ENCODE measurements at regions of chr2 and their contacts with region 1.

Region 1: DNA sequence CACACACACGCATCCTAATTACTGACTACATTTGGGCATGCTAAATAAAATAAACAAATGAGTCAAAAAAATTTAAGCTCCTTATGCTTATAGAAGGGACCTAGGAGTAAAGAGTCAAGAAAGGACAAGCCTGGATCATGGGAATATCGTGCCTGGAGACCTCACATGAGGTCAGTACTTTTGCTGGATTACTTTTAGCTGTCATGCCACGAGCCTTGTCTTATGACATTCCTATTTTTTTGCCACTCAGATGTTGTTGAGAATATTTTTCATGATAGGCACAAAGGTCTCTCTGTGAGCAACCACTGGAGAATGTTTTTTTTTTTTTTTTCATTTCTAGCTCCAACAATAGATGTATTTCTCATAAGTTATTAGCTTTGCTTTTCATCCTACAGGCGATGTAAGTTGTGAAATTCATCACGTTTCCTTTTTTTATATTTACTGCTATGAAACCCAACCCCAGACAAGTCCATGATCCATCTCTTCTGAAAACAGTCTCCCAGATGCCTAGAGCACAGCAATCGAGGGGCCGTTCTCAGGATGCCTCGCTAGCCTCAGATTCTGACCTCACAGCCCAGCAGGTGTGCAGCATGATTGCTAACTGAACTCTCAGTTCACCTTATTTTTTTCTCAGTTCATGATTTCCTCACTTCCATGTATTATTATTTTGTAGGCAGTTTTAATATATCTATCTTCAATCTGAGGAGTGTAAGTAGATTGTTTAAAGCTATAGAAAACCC is 464.5 kb downstream of the IRS1 start:
- DNase-seq: peak in 1 of 2 experiments; percentile 29
- H3K4me3 ChIP-seq: no peak overlapping the region
- H3K27ac ChIP-seq: no peak overlapping the region
- H3K4me1 ChIP-seq: peaks cover 16% of the 10 kb centered on the region
- H3K27me3 ChIP-seq: no peaks in the 10 kb centered on the region
- CTCF ChIP-seq: no peak

Region 2: DNA sequence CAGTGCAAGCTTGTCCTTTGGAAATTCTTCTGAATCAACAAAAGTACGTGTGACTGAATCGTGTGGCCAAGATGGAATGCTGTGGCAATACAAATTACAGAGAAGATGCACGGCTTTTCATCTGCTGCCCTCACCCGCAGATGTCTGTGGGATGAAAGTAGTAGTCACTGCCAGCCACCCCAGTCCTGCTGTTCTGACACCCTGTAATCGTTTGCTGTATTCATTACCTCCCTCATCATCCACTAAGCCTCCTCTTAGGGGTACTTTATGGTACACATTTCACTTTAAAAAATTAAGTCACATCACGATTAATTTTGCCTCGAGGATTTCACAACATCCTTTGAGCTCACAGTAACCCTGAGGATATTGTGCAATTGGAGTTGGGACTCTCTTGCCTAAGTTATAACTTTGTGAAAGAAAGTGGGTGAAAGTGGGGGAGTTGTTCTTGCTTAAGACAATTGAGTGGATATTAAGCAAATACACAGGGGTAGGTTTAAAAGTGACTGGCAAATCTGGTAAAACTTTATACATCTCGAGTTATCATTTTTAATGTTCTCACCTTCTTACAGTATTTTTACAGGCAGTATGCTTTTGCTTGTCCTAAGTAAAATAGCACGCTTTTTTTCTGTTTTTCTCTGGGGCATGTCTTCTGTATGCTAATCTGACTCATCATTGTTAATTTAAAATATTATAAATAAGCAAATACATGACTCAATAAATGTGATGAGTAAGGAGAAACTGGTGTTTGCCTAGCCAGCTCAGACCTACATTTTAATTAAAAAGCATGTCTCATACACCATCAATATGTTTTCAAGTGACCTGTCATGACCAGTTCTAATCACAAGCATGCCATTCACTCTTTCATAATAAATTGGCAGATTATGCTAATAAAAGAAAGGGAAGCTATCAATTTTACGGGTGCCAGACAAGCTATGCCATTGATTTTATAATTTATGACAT is 216.4 kb before region 1 on chr2:
- CTCF ChIA-PET with region 1: no interaction called
- POLR2A ChIA-PET with region 1: no interaction called
- intact Hi-C with region 1: loop called (anchors 5 kb)
- DNase-seq: peak; percentile 33 to 92
- H3K4me3 ChIP-seq: peak overlapping the region; percentile 27; the same call in 1 of the 2 replicates
- H3K27ac ChIP-seq: peak overlapping the region; percentile 93
- H3K4me1 ChIP-seq: peaks cover 64% of the 10 kb centered on the region
- H3K27me3 ChIP-seq: no peaks in the 10 kb centered on the region
- CTCF ChIP-seq: no peak

Region 3: GRCh38 chr2:226411727-226412360 is 76.7 kb after region 1 on chr2:
- CTCF ChIA-PET with region 1: no interaction called
- POLR2A ChIA-PET with region 1: interaction called, 3 read pairs
- intact Hi-C with region 1: loop called (anchors 5 kb)
- DNase-seq: peak; percentile 57 to 95
- H3K4me3 ChIP-seq: no peak overlapping the region
- H3K27ac ChIP-seq: peak overlapping the region; percentile 78
- H3K4me1 ChIP-seq: peaks cover 14% of the 10 kb centered on the region
- H3K27me3 ChIP-seq: no peaks in the 10 kb centered on the region
- CTCF ChIP-seq: no peak

Region 4: DNA sequence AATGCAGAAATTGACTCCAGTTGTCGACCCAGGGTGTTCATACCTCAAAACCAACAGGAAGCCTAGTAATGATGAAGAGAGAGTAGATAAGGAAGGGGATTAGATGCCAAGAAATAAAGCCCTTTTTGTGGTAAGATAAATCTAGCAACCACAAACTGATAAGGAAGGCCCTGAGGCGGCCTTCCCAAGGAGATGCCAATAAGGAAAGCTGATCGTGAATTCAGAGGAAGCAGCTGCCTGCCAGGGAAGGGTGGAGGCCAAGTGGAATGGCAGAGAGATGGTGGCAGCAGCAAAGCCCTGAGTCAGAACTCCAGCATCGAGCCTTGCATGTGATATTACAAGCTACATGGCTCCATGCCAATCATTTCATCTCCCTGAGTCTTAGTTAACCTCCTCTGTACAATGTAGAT is 338.2 kb after region 1 on chr2:
- CTCF ChIA-PET with region 1: no interaction called
- POLR2A ChIA-PET with region 1: no interaction called
- intact Hi-C with region 1: loop called (anchors 1 kb)
- DNase-seq: peak; percentile 92 to 97
- H3K4me3 ChIP-seq: no peak overlapping the region
- H3K27ac ChIP-seq: peak overlapping the region; percentile 66
- H3K4me1 ChIP-seq: peaks cover 34% of the 10 kb centered on the region
- H3K27me3 ChIP-seq: no peaks in the 10 kb centered on the region
- CTCF ChIP-seq: no peak